ENCODE measurements at regions of chr11 and their contacts with region 1.

Region 1: DNA sequence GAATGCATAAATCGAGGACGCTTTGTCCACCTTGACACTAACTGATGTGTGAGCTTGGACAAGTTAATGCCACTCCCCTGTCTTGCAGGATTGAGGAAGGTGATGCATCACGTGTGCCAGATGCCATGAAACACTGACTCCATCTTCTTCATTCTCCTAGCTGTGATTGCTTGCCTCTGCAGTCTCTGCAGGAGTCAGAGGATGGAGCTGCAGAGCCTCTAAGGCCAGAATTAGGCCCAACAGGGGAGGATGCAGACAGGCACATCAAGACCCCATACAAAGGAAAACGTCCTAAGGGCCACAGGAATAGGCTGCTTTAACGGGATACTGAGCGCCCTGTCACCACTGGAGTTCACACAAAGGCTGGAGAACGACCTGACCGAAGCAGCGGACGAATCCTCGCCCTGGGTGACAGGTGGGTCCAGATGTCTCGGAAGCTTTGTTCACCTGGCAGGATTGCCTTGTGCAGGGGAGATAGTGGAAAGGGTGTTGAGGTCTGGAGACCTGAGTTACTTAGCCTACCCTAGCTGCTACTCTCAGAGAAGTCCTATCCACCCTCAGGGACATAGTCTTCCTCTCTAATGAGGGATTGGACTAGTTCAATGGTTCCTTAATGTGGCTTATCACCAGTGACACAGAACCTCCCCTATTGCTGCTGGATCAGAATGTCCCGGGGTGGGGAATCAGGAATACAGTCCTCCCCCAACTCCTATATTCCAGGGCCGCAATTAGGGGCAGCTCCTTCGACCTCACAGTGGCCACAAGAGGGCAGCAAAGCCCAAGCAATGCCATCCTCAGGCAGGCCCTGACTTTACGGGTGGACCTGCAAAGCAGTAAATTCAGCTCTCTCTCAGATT is 32.4 kb downstream of the DBX1 start:
- DNase-seq: peak in 1 of 2 experiments; percentile 95
- H3K4me3 ChIP-seq: no peak overlapping the region
- H3K27ac ChIP-seq: no peak overlapping the region
- H3K4me1 ChIP-seq: peaks cover 0 to 5% (median 4%) of the 10 kb centered on the region in 4 experiments; a peak in 5 of 7 replicates
- H3K27me3 ChIP-seq: peaks cover 8 to 24% (median 17%) of the 10 kb centered on the region in 4 experiments
- CTCF ChIP-seq: peak; percentile 90 to 93 (median 92)
- EP300 ChIP-seq: no peak
- POLR2A ChIP-seq: no peak
- RAD21 ChIP-seq: peak; percentile 98

Region 2: DNA sequence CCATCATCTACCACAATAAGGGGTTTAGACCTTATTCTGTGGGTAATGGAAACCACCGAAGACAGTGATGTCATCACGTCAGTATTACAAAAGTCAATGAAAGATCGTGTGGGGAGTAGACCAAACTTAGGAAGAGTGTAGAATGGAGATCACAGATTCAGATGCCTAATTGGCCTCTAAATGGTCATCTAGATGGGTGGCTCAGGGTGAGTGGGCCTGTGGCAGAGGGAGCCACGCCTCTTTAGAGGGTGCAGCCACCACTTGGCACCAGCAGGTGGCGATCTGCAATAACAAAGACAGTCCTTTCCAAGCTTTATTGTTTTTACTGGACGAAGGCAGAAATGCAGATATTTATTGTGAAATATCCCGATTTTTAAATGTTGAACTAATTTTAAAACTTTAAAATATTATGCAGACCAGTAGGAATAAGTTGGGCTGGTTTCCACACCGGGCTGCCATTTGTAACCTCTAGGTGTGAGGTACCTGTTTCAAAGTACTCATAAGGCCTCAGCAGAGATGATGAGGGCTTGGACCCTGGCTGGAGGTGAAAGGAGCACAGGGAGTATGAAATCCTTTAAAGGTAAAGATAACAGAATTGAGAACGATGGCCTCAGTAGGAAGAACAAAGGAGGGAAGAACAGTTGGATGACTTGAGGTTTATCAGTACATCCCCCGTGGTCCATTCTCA is 189.6 kb before region 1 on chr11:
- CTCF ChIA-PET with region 1: interaction called, 17 read pairs
- POLR2A ChIA-PET with region 1: no interaction called
- DNase-seq: peak in 1 of 2 experiments; percentile 79
- H3K4me3 ChIP-seq: no peak overlapping the region
- H3K27ac ChIP-seq: no peak overlapping the region
- H3K4me1 ChIP-seq: peaks cover 2 to 11% (median 4%) of the 10 kb centered on the region in 4 experiments; a peak in 4 of 7 replicates
- H3K27me3 ChIP-seq: no peaks in the 10 kb centered on the region
- CTCF ChIP-seq: peak; percentile 65 to 94 (median 90)
- EP300 ChIP-seq: no peak
- POLR2A ChIP-seq: no peak
- RAD21 ChIP-seq: peak; percentile 68 to 69

Region 3: DNA sequence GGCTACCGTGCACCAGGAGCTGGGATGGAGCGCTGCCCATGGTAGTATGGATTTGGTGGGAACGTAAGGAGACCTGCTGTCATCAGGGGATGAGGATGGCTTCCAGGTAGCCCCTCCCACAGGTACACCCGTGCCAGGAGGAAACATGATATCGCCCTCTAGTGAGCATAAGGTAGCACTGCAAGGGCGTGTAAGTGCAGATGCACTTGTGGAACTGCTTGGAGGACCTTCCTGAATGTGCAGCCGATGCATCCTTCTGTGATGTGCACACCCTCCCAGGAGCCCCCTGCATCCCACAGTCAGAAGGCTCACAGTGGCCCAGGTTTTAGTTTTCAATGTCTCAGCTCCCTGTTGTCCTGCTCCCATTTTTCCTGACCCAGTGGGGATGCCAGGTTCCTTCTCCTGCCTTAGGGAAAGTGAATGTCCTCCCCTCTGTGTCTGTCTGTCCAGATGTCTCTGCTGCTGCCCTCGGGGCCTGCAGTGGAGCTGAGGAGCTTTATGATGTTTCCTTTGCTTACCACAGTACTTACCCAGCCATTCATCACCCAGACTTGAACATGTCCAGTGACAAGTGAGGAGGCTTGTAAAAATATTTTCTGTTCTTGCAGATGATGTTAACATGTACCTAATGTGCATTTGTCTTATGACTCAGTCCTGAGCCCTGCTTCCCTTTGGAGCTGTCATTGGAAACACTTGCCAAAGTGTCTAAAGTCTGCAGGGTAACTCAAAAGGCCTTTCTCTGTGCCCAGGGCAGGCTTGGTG is 16.8 kb before region 1 on chr11:
- CTCF ChIA-PET with region 1: interaction called, 22 read pairs
- POLR2A ChIA-PET with region 1: no interaction called
- DNase-seq: peak in 1 of 2 experiments; percentile 76
- H3K4me3 ChIP-seq: no peak overlapping the region
- H3K27ac ChIP-seq: no peak overlapping the region; the same call in 1 of the 2 replicates
- H3K4me1 ChIP-seq: no peaks in the 10 kb centered on the region
- H3K27me3 ChIP-seq: no peaks in the 10 kb centered on the region
- CTCF ChIP-seq: peak; percentile 85 to 99 (median 94)
- EP300 ChIP-seq: no peak
- POLR2A ChIP-seq: no peak
- RAD21 ChIP-seq: peak; percentile 83 to 88

Region 4: DNA sequence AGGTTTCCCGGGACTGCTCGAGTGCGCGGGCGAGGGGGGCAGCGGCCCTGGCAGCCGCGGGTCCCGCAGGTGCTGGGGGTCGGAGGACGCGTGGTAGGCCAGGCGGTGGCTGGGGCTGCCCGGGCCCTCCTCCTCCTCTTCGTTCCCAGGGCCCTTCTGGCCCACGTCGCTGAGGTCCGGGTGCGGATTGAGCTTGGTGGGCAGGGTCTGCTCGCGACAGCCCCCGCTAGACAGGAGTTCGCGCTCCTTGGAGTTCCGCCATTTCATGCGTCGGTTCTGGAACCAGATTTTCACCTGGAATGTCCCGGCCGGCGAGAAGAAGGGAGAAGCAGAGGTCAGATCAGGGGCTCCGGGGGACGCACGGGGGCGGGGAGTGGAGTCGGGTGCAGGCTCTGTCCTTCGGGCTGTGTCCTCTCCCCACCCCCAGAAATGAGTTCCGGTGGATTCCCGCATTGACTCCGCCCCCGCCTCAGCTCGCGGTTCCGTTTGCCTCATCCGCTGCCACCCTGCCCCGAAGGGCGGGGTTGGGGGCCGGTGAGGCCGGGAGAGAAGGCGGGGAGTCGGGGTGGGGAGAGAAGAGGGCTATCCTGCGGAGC is 28.5 kb after region 1 on chr11:
- CTCF ChIA-PET with region 1: interaction called, 33 read pairs
- POLR2A ChIA-PET with region 1: interaction called, 4 read pairs
- DNase-seq: peak in 1 of 2 experiments; percentile 87
- H3K4me3 ChIP-seq: peak overlapping the region; percentile 50 to 76 (median 57)
- H3K27ac ChIP-seq: no peak overlapping the region
- H3K4me1 ChIP-seq: peaks cover 8 to 42% (median 20%) of the 10 kb centered on the region in 4 experiments
- H3K27me3 ChIP-seq: peaks cover 41 to 69% (median 66%) of the 10 kb centered on the region in 4 experiments
- CTCF ChIP-seq: no peak
- EP300 ChIP-seq: no peak
- POLR2A ChIP-seq: no peak
- RAD21 ChIP-seq: no peak

Region 5: GRCh38 chr11:20261526-20261925 is 133.6 kb after region 1 on chr11:
- CTCF ChIA-PET with region 1: no interaction called
- POLR2A ChIA-PET with region 1: no interaction called
- DNase-seq: no peak
- H3K4me3 ChIP-seq: no peak overlapping the region
- H3K27ac ChIP-seq: no peak overlapping the region
- H3K4me1 ChIP-seq: no peaks in the 10 kb centered on the region
- H3K27me3 ChIP-seq: no peaks in the 10 kb centered on the region
- CTCF ChIP-seq: no peak
- EP300 ChIP-seq: no peak
- POLR2A ChIP-seq: no peak
- RAD21 ChIP-seq: no peak

Region 6: GRCh38 chr11:20363500-20364411 is 235.9 kb after region 1 on chr11 and contains the start of gene HTATIP2:
- CTCF ChIA-PET with region 1: interaction called, 35 read pairs
- POLR2A ChIA-PET with region 1: no interaction called
- DNase-seq: peak in 1 of 2 experiments; percentile 70
- H3K4me3 ChIP-seq: peak within 1 kb of the TSS; percentile 47 to 69 (median 58)
- H3K27ac ChIP-seq: no peak within 1 kb of the TSS
- H3K4me1 ChIP-seq: peaks cover 0 to 12% (median 6%) of the 10 kb centered on the region in 4 experiments; a peak in 5 of 7 replicates
- H3K27me3 ChIP-seq: peaks cover 6 to 19% (median 15%) of the 10 kb centered on the region in 4 experiments
- CTCF ChIP-seq: no peak
- EP300 ChIP-seq: no peak
- POLR2A ChIP-seq: no peak; a peak in 1 of 3 replicates
- RAD21 ChIP-seq: no peak
- total RNA-seq, gene HTATIP2: 33.1 and 37.1 TPM in 2 replicates